SK-N-SH (cell line): ENCODE measurements at regions of chr15 and their contacts with region 1.

Region 1: GRCh38 chr15:48963524-48964113 is at the start of gene SHC4:
- DNase-seq: peak; percentile 84
- H3K4me3 ChIP-seq: peak within 1 kb of the TSS; percentile 76 to 78
- H3K27ac ChIP-seq: peak within 1 kb of the TSS; percentile 79 to 84
- H3K4me1 ChIP-seq: peaks cover 10 to 12% of the 10 kb centered on the region in 2 experiments; a peak in 2 of 4 replicates
- H3K27me3 ChIP-seq: no peaks in the 10 kb centered on the region
- CTCF ChIP-seq: peak; percentile 58
- EP300 ChIP-seq: no peak; a peak in 1 of 4 replicates
- RAD21 ChIP-seq: peak; percentile 27; the same call in 1 of the 2 replicates
- polyA plus RNA-seq, gene SHC4: 1.6 and 1.9 TPM in 2 replicates

Region 2: DNA sequence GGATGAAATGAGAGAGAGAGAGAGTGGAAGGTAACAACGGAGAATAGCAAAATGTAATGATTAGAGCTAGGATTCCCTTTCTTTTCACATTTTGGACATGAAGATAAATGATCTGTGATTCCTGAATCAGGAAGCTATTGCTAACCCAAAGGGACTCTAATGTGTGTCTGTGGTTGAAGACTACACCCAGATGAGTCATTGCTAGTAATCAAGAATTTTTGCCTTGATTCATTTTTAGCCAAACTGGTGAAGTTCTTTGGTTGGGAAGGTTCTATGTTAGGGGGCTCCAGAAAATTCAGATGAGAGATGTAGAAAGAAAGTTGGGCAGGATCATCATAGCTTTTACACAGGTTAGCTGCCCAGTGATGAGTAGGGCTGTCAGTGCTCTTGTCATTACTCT is 516.0 kb before region 1 on chr15:
- CTCF ChIA-PET with region 1: no interaction called
- POLR2A ChIA-PET with region 1: no interaction called
- DNase-seq: no peak
- H3K4me3 ChIP-seq: no peak overlapping the region
- H3K27ac ChIP-seq: peak overlapping the region in 1 of 2 experiments; percentile 67; a peak in 2 of 4 replicates
- H3K4me1 ChIP-seq: peaks cover 7 to 19% of the 10 kb centered on the region in 2 experiments; a peak in 3 of 4 replicates
- H3K27me3 ChIP-seq: no peaks in the 10 kb centered on the region
- CTCF ChIP-seq: no peak
- EP300 ChIP-seq: no peak
- RAD21 ChIP-seq: no peak

Region 3: GRCh38 chr15:48877630-48878595 is 85.7 kb before region 1 on chr15 and contains the start of gene EID1:
- CTCF ChIA-PET with region 1: interaction called, 4 read pairs
- POLR2A ChIA-PET with region 1: interaction called, 15 read pairs
- DNase-seq: peak; percentile 90
- H3K4me3 ChIP-seq: peak within 1 kb of the TSS; percentile 82 to 98
- H3K27ac ChIP-seq: peak within 1 kb of the TSS; percentile 82 to 98
- H3K4me1 ChIP-seq: peaks cover 0 to 12% of the 10 kb centered on the region in 2 experiments; a peak in 2 of 4 replicates
- H3K27me3 ChIP-seq: no peaks in the 10 kb centered on the region
- CTCF ChIP-seq: peak; percentile 16; the same call in 1 of the 2 replicates
- EP300 ChIP-seq: no peak
- RAD21 ChIP-seq: peak; percentile 2; the same call in 1 of the 2 replicates
- polyA plus RNA-seq, gene EID1: 170 and 228 TPM in 2 replicates